Activated T-helper 1 cell treated with anti-CD3 and anti-CD28 coated beads, Interleukin-12 subunit alpha, Interleukin-12 subunit beta, Interleukin-2, Interleukin-4 antibody, amounts not matched to agents 30 ng/mL and 10 ng/mL and 1 ng/mL, durations not matched to agents 14 hours and 24 hours and 36 hours (primary cell): ENCODE measurements at regions of chr14 and their contacts with region 1.

Region 1: DNA sequence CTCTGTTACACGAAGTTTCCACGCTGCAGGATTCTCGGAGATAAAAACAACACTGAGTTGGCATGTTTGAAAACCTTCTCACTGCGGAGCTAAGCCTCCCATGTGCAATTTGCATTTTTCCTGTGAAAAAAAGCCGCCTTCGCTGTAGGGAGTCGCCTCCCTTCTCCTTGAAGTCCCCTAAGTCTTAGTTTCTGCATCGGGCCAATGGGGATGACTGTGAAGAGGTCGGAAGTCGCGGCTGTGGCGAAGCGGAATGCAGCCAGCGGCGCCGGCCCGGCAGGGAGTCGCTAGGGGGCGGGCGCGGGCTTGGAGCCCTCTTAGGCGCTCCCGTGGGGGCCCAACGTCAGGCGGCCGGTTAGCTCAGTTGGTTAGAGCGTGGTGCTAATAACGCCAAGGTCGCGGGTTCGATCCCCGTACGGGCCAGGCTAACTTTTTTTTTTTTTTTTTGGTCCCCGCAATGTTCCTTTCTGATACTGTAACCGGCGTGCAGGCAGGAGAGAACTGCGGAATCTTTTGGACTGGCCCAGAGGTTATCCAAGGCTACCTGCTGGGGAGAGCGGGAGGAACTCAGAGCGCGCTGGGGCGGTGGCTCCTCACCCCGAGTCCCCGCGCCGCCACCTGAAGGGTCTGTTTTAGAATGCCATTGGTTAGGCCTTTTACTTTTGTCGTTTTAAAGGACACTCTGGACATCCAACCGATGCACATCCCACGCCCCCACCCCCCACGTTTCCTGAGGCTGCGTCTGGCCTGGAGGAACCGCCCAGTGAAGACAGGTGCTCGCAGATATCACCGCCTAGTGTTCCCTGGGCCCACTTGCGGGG is 2.6 kb upstream of the ZNF839 start:
- DNase-seq: peak; percentile 94
- H3K4me3 Mint-ChIP-seq: peak overlapping the region; percentile 94
- H3K27ac Mint-ChIP-seq: peak overlapping the region; percentile 92
- H3K4me1 Mint-ChIP-seq: peaks cover 56% of the 10 kb centered on the region
- H3K27me3 Mint-ChIP-seq: peaks cover 3% of the 10 kb centered on the region

Region 2: GRCh38 chr14:101823511-101824120 is 493.3 kb before region 1 on chr14:
- intact Hi-C with region 1: loop called (anchors 10 kb)
- DNase-seq: peak; percentile 74
- H3K4me3 Mint-ChIP-seq: peak overlapping the region; percentile 78
- H3K27ac Mint-ChIP-seq: peak overlapping the region; percentile 98
- H3K4me1 Mint-ChIP-seq: peaks cover 84% of the 10 kb centered on the region
- H3K27me3 Mint-ChIP-seq: no peaks in the 10 kb centered on the region

Region 3: GRCh38 chr14:102020058-102020971 is 296.6 kb before region 1 on chr14:
- intact Hi-C with region 1: loop called (anchors 1 kb)
- DNase-seq: peak; percentile 38
- H3K4me3 Mint-ChIP-seq: peak overlapping the region; percentile 32
- H3K27ac Mint-ChIP-seq: peak overlapping the region; percentile 76
- H3K4me1 Mint-ChIP-seq: peaks cover 20% of the 10 kb centered on the region
- H3K27me3 Mint-ChIP-seq: no peaks in the 10 kb centered on the region

Region 4: GRCh38 chr14:102139248-102140026 is 177.5 kb before region 1 on chr14 and contains the start of gene WDR20:
- intact Hi-C with region 1: loop called (anchors 2 kb)
- DNase-seq: peak; percentile 99
- H3K4me3 Mint-ChIP-seq: peak within 1 kb of the TSS; percentile 94
- H3K27ac Mint-ChIP-seq: peak within 1 kb of the TSS; percentile 91
- H3K4me1 Mint-ChIP-seq: peaks cover 19% of the 10 kb centered on the region
- H3K27me3 Mint-ChIP-seq: no peaks in the 10 kb centered on the region
- total RNA-seq, gene WDR20: 33.9 and 34.2 TPM in 2 replicates

Region 5: GRCh38 chr14:102304611-102305509 is 12.1 kb before region 1 on chr14 and contains the start of gene MOK:
- intact Hi-C with region 1: loop called (anchors 1 kb)
- DNase-seq: peak; percentile 98
- H3K4me3 Mint-ChIP-seq: peak within 1 kb of the TSS; percentile 96
- H3K27ac Mint-ChIP-seq: peak within 1 kb of the TSS; percentile 87
- H3K4me1 Mint-ChIP-seq: peaks cover 12% of the 10 kb centered on the region
- H3K27me3 Mint-ChIP-seq: peaks cover 10% of the 10 kb centered on the region
- total RNA-seq, gene MOK: 6.0 and 7.0 TPM in 2 replicates